Heart left ventricle (tissue), 16 donors: ENCODE measurements at regions of chr18 and their contacts with region 1.

Region 1: DNA sequence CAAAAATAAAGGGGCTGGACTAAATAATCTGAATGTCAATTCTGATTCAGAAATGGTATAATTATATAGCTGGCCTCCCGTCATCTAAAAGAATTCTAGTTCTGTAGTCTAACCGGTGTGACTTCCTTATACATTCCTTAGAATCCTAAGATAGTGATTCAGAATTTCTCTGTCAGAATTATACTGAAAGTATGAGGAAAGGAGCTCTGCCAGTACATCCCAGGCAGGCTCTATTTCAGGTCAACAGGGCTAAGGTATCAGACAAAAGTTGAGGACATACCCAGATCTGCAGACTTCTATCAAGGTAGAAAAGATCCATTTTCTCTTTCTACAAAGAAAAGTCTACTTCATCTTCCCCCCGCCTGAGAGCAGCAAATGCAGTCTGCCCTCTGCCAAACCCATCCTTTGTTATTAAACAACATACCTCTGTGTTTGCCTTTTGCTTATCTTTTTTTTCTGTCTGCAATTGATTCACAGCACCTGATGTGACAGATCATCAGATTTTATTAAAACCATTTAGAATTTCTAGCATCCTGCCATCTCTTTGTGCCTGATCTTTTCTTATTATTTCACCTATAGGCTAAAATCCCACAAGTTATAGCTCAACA is 128.4 kb downstream of the METTL4 start:
- DNase-seq: no peak
- ATAC-seq: no peak
- H3K4me3 ChIP-seq: no peak overlapping the region
- H3K27ac ChIP-seq: no peak overlapping the region
- H3K4me1 ChIP-seq: no peaks in the 10 kb centered on the region
- H3K27me3 ChIP-seq: no peaks in the 10 kb centered on the region
- CTCF ChIP-seq: no peak
- POLR2A ChIP-seq: no peak

Region 2: GRCh38 chr18:2478662-2479061 is 35.8 kb after region 1 on chr18:
- intact Hi-C with region 1: loop called in 1 of 10 experiments (anchors 5 kb)
- DNase-seq: no peak
- ATAC-seq: no peak
- H3K4me3 ChIP-seq: no peak overlapping the region
- H3K27ac ChIP-seq: no peak overlapping the region
- H3K4me1 ChIP-seq: no peaks in the 10 kb centered on the region
- H3K27me3 ChIP-seq: no peaks in the 10 kb centered on the region
- CTCF ChIP-seq: no peak
- POLR2A ChIP-seq: no peak

Region 3: DNA sequence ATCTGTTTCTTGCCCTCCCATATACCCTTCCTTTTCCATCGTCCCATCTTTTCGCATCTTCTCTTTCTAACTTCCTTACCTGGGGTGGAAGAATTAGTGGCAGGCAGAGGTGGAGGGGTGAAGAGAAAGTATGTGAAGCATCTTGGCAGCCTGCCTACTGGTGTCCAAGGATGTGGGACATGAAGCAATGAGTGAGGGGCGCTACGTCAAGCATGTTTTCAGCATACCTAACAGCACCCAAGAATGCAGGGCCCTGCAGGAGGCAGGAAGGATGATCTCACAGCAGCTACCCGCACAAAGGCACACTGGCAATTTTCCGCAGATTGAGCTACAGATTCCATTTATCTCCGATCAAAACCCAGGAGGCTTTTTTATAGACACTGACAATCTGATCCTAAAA is 86.3 kb after region 1 on chr18:
- intact Hi-C with region 1: no loop called
- DNase-seq: no peak
- ATAC-seq: no peak
- H3K4me3 ChIP-seq: no peak overlapping the region
- H3K27ac ChIP-seq: no peak overlapping the region
- H3K4me1 ChIP-seq: no peaks in the 10 kb centered on the region
- H3K27me3 ChIP-seq: no peaks in the 10 kb centered on the region
- CTCF ChIP-seq: no peak
- POLR2A ChIP-seq: no peak

Region 4: DNA sequence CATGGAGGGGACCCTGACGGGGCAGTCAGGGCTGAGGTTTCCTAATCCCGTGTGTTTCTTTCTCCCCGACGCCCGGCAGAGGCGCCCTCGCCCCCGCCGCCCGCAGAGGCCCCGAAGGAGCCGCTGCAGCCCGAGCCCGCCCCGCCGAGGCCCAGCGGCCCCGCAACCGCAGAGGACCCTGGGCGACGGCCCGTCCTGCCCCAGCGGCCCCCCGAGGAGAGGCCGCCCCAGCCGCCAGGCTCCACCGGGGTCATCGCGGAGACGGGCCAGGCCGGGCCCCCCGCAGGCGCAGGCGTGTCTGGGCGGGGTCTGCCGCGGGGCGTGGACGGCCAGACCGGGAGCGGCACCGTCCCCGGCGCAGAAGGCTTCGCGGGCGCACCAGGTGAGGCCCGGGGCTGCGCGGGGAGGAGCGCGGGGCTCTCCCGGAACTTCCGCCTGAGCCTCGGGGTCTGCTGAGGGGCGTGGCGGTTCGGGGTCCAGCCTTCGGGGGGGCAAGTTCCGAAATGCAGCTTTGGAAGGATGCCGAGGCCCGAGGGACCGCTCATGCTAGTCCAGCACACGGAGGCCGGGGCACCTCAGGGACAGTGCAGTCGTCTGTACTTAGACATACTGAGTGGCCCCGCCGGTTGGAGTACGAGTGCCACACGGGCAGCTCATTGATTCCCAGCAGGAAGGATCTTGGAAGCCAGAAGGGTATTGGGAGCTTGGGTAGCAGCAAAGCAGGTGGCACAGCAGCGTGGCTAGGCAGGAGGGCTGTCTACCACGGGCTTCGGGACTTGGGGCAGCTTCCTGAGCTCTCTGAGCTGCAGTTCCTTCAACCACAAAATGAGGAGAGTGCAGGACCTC is 464.0 kb after region 1 on chr18:
- intact Hi-C with region 1: no loop called
- DNase-seq: peak in 3 of 5 donors; percentile 35 to 69 (median 45)
- ATAC-seq: peak in 2 of 4 donors; percentile 27 to 62
- H3K4me3 ChIP-seq: peak overlapping the region; percentile 51 to 79 (median 61)
- H3K27ac ChIP-seq: peak overlapping the region in 11 of 12 donors; percentile 22 to 88 (median 54)
- H3K4me1 ChIP-seq: peaks cover 5 to 52% (median 25%) of the 10 kb centered on the region in 12 donors
- H3K27me3 ChIP-seq: peaks cover 0 to 7% (median 0%) of the 10 kb centered on the region in 9 donors
- CTCF ChIP-seq: peak in 5 of 12 donors; percentile 23 to 39 (median 33)
- POLR2A ChIP-seq: no peak